ENCODE measurements at regions of chr2 and their contacts with region 1.

Region 1: DNA sequence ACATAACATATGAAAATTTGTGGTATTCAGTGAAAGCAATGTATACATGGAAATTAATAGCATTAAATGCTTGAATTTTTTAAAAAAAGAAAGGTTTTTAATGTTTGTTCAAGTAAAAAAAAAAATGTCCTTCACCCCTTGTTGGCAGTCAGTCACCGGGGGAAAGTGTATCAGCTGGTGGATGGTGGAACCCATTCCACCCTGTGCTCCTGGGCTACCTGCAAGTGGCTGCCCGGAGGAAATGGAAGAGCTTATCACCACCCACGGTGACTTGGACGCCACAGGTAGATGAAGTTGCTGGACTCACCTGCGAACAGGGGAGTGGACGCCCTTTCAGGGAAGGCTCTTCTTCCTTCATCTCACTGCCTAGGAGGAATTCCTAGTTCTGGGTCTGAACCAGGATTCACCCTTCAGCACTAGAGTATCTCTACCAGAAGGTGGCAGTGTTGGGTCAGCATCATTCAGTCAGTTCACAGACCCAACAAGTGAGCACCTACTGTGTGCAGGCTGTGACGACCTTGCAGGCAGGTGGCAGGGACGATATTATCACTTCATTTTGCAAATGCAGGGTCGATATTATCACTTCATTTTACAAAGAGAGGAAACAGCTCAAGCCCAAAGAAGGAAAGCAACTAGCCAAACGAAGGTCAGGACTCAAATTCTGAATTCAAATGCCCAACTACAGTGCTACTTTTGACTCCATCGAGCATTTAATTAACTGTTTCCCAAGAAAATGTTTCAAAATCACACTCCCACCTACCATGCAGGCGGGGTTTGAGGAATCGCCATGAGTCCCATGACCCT is 35.8 kb downstream of the CIB4 start:
- DNase-seq: no peak
- ATAC-seq: no peak
- H3K4me3 ChIP-seq: no peak overlapping the region
- H3K27ac ChIP-seq: no peak overlapping the region
- H3K4me1 ChIP-seq: no peaks in the 10 kb centered on the region
- H3K27me3 ChIP-seq: no peaks in the 10 kb centered on the region

Region 2: DNA sequence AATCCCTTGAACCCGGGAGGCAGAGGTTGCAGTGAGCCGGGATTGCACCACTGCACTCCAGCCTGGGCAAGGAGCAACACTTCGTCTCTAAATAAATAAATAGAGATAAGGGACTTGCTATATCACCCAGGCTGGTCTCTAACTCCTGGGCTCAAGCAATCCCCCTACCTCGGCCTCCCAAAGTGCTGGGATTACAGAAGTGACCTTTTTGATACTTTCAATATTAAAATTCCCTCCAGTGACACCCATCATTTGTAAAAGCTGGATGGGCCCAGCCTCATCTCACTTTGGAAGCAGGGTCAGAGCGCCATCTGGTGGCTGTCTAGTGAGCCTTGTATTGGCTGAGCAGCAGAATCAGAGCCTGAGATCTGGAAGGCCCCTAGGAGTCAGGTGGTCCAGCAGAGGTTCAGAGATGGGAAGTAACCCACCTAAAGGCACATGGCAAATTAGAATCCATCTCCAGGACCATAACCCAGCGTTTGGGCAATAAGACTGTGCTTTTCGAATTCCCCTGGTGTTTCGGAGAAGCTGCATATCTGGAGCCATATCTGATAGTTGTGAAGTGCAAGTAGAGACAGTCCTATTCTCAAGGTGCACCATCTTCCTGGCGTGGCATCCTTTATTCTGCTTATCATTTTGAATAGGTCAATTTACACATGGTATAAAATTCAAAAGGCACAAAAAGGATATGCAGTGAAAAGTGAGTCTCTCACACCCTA is 140.4 kb after region 1 on chr2:
- intact Hi-C with region 1: loop called (anchors 1 kb)
- DNase-seq: peak; percentile 90 to 95
- ATAC-seq: peak; percentile 86
- H3K4me3 ChIP-seq: no peak overlapping the region
- H3K27ac ChIP-seq: no peak overlapping the region
- H3K4me1 ChIP-seq: no peaks in the 10 kb centered on the region
- H3K27me3 ChIP-seq: no peaks in the 10 kb centered on the region